ENCODE measurements at regions of chr17 and their contacts with region 1.

Region 1: GRCh38 chr17:50094753-50095619 is at the start of gene PDK2:
- DNase-seq: peak; percentile 93
- ATAC-seq: peak; percentile 91
- H3K4me3 Mint-ChIP-seq: peak within 1 kb of the TSS; percentile 96
- H3K27ac Mint-ChIP-seq: peak within 1 kb of the TSS; percentile 94
- H3K4me1 Mint-ChIP-seq: peaks cover 26% of the 10 kb centered on the region
- H3K27me3 Mint-ChIP-seq: no peaks in the 10 kb centered on the region
- CTCF ChIP-seq: no peak
- total RNA-seq, gene PDK2: 15.9 and 16.2 TPM in 2 replicates

Region 2: DNA sequence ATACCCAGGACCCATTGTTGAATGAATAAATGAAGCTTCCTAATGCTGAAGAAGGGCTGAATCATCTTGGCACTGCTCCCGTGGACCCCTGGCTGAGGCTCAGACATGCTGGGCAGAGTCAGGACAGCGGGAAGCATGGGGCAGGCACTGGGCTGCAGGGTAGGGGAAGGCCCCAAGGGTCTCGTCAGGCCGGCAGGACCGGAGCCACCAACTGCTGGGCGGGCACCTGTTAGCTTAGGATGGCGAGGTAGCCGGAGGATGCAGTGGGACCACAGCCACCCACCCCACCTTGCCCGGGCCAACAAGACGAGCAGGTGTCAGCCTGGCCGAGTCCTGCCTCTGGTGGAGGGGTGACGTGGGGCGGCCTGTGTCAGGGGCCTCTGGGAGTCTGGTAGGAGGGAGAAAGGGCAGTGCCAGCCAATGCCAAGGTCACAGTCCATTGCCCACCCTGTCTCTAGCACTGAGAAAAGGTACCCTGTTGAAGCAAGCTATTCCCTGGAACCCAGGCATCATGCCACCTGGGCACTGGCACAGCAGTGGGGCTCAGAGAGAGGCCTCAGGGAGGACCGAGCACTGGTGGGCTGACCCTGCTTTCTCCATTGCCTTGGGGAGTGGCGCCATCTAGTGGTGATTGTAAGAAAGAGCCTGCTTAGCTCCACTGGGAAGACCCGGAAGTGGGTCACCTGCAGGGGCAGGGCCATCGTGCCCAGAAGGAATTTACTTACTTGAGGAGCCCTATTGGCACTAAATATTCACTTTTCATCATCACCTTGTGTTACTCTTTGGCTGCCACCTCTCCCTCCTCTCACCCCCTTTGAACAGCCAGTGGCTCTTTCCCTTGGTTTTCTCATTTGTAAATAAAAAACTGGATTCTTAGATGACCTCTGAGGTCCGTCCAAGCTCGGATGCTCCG is 96.9 kb before region 1 on chr17:
- CTCF ChIA-PET with region 1: interaction called, 15 read pairs
- POLR2A ChIA-PET with region 1: no interaction called
- intact Hi-C with region 1: no loop called
- DNase-seq: peak; percentile 59
- ATAC-seq: peak; percentile 82
- H3K4me3 Mint-ChIP-seq: peak overlapping the region; percentile 19
- H3K27ac Mint-ChIP-seq: no peak overlapping the region
- H3K4me1 Mint-ChIP-seq: peaks cover 31% of the 10 kb centered on the region
- H3K27me3 Mint-ChIP-seq: peaks cover 64% of the 10 kb centered on the region
- CTCF ChIP-seq: peak; percentile 71

Region 3: GRCh38 chr17:50114849-50115357 is 19.9 kb after region 1 on chr17:
- CTCF ChIA-PET with region 1: interaction called, 13 read pairs
- POLR2A ChIA-PET with region 1: no interaction called
- intact Hi-C with region 1: loop called (anchors 2 kb)
- DNase-seq: no peak
- ATAC-seq: peak; percentile 18
- H3K4me3 Mint-ChIP-seq: peak overlapping the region; percentile 28
- H3K27ac Mint-ChIP-seq: no peak overlapping the region
- H3K4me1 Mint-ChIP-seq: peaks cover 14% of the 10 kb centered on the region
- H3K27me3 Mint-ChIP-seq: peaks cover 36% of the 10 kb centered on the region
- CTCF ChIP-seq: no peak

Region 4: GRCh38 chr17:50161023-50161910 is 66.3 kb after region 1 on chr17:
- CTCF ChIA-PET with region 1: interaction called, 18 read pairs
- POLR2A ChIA-PET with region 1: interaction called, 6 read pairs
- intact Hi-C with region 1: loop called (anchors 1 kb)
- DNase-seq: peak; percentile 89
- ATAC-seq: peak; percentile 95
- H3K4me3 Mint-ChIP-seq: peak overlapping the region; percentile 73
- H3K27ac Mint-ChIP-seq: peak overlapping the region; percentile 42
- H3K4me1 Mint-ChIP-seq: peaks cover 48% of the 10 kb centered on the region
- H3K27me3 Mint-ChIP-seq: no peaks in the 10 kb centered on the region
- CTCF ChIP-seq: peak; percentile 68

Region 5: DNA sequence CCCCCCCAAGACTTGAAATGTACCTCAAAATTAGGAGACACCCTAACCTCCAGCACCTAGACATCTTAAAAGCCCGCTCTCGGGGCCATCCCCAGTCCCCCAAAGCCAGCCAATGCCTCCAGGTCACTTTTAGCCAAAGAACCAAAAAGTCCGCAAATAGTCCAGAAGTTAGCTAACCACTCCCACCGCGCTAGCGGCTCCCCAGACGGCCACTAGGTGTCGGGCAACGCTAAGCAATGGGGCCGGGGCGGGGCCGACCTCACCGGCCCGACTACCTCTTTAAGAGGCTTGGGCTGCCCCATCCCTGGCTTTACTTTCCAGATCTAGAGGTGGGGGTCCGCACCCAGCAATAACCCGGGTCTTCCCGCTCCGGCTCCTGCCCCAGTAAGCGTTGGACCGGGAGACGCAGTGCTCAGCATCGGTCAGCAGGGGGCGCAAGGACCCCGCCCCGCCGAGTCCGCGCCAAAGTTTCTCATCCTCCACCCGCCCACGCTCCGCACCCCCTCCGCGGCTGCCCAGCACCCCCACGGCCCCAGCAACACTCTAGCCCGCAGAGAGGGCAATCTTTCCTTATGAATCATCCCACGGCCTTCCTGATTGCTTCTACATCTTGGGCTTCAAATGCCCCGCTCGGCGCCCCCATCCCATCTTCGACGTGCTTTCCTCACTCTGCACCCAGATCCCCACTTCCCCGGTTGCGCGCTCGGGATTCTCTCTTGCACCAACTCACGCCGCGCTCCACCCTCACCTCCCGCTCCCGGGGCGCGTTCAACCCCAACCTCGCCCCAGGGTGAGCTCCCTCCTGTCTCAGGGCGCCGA is 105.7 kb after region 1 on chr17:
- CTCF ChIA-PET with region 1: interaction called, 11 read pairs
- POLR2A ChIA-PET with region 1: interaction called, 3 read pairs
- intact Hi-C with region 1: loop called (anchors 1 kb)
- DNase-seq: peak; percentile 76
- ATAC-seq: peak; percentile 80
- H3K4me3 Mint-ChIP-seq: peak overlapping the region; percentile 80
- H3K27ac Mint-ChIP-seq: no peak overlapping the region
- H3K4me1 Mint-ChIP-seq: peaks cover 27% of the 10 kb centered on the region
- H3K27me3 Mint-ChIP-seq: peaks cover 44% of the 10 kb centered on the region
- CTCF ChIP-seq: peak; percentile 100

Region 6: GRCh38 chr17:50297407-50297865 is 202.4 kb after region 1 on chr17:
- CTCF ChIA-PET with region 1: interaction called, 37 read pairs
- POLR2A ChIA-PET with region 1: no interaction called
- intact Hi-C with region 1: loop called (anchors 1 kb)
- DNase-seq: peak; percentile 67
- ATAC-seq: peak; percentile 100
- H3K4me3 Mint-ChIP-seq: no peak overlapping the region
- H3K27ac Mint-ChIP-seq: no peak overlapping the region
- H3K4me1 Mint-ChIP-seq: no peaks in the 10 kb centered on the region
- H3K27me3 Mint-ChIP-seq: peaks cover 17% of the 10 kb centered on the region
- CTCF ChIP-seq: peak; percentile 21

Measured in activated B cell treated with CpG ODN at 0.5 μM for 24 hours (primary cell).